ENCODE measurements at regions of chr5 and their contacts with region 1.

Region 1: DNA sequence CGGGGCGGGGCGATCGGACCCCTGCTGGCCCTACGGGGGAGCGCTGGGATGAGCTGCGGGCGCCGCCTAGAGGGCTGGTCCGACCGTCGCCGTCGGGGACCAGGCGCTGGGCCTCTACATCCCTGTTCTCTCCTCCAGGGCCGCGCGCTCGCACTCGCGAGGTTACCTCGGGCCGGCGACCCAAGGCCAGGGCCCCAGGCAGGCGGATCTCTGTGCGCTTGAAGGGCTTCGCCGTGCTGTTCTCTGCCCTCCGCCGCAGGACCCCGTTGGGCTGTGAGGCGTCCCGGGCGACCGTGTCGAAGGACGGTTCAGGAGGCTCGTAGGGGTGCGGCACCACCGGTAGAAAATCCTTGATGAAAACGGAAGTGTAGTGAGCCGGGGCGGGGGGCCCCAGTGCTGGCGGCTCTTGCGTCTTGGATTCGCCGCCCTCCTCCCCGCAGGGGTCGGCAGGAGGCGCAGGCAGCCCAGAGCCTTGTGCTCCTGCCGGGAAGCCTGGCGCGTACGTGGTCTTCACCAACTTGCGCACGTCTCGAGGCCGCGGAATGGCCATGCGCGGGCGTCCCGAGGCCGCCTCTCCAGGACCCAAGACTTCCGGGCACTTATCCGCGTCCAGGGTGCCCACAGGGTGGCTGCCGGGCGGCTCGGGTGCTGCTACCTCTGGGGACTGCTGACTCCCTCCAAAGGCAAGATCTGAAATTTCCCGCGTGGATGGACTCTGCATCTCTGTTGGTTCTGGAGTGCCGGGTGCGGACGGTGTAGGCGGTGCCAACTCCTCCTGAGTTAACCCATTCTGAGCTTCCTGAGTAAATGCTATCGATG is 2.0 kb downstream of the PROB1 start:
- DNase-seq: peak in 1 of 2 donors; percentile 61
- ATAC-seq: no peak
- H3K4me3 ChIP-seq: peak overlapping the region; percentile 67 to 84 (median 72)
- H3K27ac ChIP-seq: peak overlapping the region; percentile 99 to 100 (median 100)
- H3K4me1 ChIP-seq: peaks cover 35 to 63% of the 10 kb centered on the region in 2 donors
- H3K27me3 ChIP-seq: no peaks in the 10 kb centered on the region
- CTCF ChIP-seq: peak; percentile 36 to 60 (median 51)
- POLR2A ChIP-seq: no peak

Region 2: GRCh38 chr5:138752951-138753793 is 639.7 kb before region 1 on chr5 and contains the start of gene CTNNA1:
- in situ Hi-C with region 1: no loop called
- intact Hi-C with region 1: loop called (anchors 2 kb)
- DNase-seq: peak; percentile 66 to 80
- ATAC-seq: peak; percentile 85 to 87
- H3K4me3 ChIP-seq: peak within 1 kb of the TSS; percentile 75 to 94 (median 79)
- H3K27ac ChIP-seq: peak within 1 kb of the TSS; percentile 87 to 100 (median 96)
- H3K4me1 ChIP-seq: peaks cover 13 to 22% of the 10 kb centered on the region in 2 donors
- H3K27me3 ChIP-seq: no peaks in the 10 kb centered on the region
- CTCF ChIP-seq: peak in 1 of 5 experiments; percentile 11
- POLR2A ChIP-seq: peak; percentile 76 to 84
- total RNA-seq, gene CTNNA1: 92.6 to 164 (median 114) TPM

Region 3: DNA sequence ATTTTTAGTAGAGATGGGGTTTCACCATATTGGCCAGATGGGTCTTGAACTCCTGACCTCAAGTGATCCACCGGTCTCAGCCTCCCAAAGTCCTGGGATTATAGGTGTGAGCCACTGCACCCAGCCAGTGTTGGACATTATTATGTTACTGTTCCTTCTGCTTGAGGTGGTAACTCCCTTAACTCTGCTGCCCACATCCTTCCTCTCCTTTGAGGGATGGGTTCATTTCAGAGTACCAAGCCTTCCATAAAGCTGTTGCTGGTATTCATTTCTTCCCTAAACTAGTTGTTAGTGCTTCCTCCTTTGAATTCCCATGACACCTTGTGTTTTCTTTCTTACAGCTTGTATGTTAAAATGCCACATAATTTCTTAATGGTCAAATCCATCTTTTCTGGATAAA is 585.7 kb before region 1 on chr5:
- in situ Hi-C with region 1: no loop called
- intact Hi-C with region 1: no loop called
- DNase-seq: no peak
- ATAC-seq: no peak
- H3K4me3 ChIP-seq: no peak overlapping the region
- H3K27ac ChIP-seq: no peak overlapping the region
- H3K4me1 ChIP-seq: peaks cover 13 to 18% of the 10 kb centered on the region in 2 donors
- H3K27me3 ChIP-seq: no peaks in the 10 kb centered on the region
- CTCF ChIP-seq: no peak
- POLR2A ChIP-seq: no peak

Region 4: GRCh38 chr5:138849426-138849825 is 543.5 kb before region 1 on chr5:
- in situ Hi-C with region 1: no loop called
- intact Hi-C with region 1: no loop called
- DNase-seq: no peak
- ATAC-seq: no peak
- H3K4me3 ChIP-seq: no peak overlapping the region
- H3K27ac ChIP-seq: no peak overlapping the region
- H3K4me1 ChIP-seq: peaks cover 18 to 39% of the 10 kb centered on the region in 2 donors
- H3K27me3 ChIP-seq: no peaks in the 10 kb centered on the region
- CTCF ChIP-seq: no peak
- POLR2A ChIP-seq: no peak

Region 5: DNA sequence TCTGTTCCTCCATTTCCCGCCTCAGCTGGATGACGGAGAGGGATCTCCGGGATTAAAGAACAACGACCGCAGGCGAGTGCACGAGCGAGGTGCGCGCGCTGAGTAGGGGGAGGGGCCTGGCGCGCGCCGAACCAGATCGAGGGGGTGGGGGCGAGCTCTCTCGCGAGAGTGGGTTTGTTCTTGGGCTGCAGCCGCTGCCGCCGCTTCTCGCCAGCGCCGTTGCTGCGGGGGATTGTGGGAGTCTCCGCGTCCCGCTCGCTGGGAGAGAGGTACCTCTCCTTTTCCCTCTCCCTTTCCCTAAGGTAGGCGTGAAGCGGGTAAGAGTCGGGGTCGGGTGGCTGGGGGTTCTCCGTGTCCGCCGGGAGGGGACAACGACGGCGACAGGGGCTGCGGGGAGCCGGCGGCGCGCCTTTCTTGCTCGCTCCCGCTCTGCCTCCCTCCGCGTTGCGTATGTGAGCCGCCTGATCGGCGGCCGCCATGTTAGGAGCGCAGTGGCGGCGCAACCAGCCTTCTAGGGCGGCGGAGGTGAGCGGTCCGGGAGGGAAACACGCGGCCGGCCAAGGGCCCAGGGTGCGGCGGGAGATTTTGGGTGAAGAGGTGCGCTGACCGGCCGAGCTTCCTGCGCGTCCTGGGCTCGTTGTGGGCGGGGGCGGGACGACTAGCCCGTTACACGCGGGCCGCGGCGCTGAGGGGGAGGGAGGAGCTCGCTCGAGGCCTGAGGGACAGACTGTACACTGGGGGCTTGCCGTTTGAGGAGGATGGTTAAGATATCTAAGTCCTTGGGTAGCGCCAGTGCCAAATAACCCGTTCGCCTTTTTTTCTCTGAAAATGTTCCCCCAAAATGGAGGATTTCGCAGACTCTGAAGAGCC is 99.1 kb before region 1 on chr5 and contains the start of gene MATR3:
- in situ Hi-C with region 1: no loop called
- intact Hi-C with region 1: loop called (anchors 1 kb)
- DNase-seq: peak; percentile 92 to 96
- ATAC-seq: peak; percentile 86 to 90
- H3K4me3 ChIP-seq: peak within 1 kb of the TSS; percentile 82 to 97 (median 86)
- H3K27ac ChIP-seq: peak within 1 kb of the TSS; percentile 93 to 100 (median 99)
- H3K4me1 ChIP-seq: peaks cover 42 to 43% of the 10 kb centered on the region in 2 donors
- H3K27me3 ChIP-seq: no peaks in the 10 kb centered on the region
- CTCF ChIP-seq: no peak
- POLR2A ChIP-seq: peak; percentile 98 to 99
- total RNA-seq, gene MATR3: 115 to 188 (median 156) TPM

Region 6: DNA sequence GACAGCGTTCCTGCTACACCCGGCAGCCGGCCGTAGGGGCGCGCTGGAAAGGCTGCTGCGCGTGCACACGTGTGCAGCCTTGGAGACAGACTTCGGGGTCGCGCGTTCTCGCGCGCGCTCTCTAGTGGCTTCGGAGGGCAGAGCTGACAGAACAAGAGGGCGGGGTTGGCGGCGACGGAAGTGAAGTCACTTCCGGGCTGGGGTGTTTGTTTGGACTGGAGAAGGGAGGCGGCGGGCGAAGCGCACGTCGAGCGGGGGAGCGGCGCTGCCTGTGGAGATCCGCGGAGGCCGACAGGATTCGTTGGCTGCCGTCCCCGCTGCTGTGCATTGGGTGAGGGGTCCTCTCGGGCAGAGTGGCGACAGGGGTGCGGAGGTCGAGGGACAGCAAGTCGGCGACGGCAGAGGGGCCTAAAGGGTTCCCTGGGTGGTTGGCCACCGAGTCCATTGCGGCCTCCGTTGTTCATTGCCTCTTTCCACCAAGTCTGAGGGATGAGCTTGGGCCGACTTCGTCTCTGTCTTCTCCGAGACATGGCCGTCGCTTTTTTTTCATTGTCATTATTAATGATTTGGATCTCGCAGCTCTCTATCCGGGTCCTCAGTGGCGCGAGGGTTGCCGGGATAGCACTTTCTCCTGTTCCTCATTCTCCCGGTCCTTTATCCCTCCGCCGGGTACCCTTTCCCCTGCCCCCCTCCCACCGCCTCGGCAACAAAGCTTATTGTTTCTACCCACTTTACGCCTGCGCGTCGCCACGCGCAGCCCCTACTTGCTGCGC is 51.1 kb before region 1 on chr5 and contains the start of gene PAIP2:
- in situ Hi-C with region 1: no loop called
- intact Hi-C with region 1: loop called (anchors 2 kb)
- DNase-seq: peak; percentile 94 to 96
- ATAC-seq: peak; percentile 92 to 95
- H3K4me3 ChIP-seq: peak within 1 kb of the TSS; percentile 89 to 98 (median 92)
- H3K27ac ChIP-seq: peak within 1 kb of the TSS; percentile 96 to 100 (median 98)
- H3K4me1 ChIP-seq: peaks cover 21 to 36% of the 10 kb centered on the region in 2 donors
- H3K27me3 ChIP-seq: no peaks in the 10 kb centered on the region
- CTCF ChIP-seq: peak; percentile 57 to 86 (median 80)
- POLR2A ChIP-seq: peak; percentile 92 to 96
- total RNA-seq, gene PAIP2: 111 to 148 (median 126) TPM

Region 7: GRCh38 chr5:139371482-139372435 is 21.1 kb before region 1 on chr5:
- in situ Hi-C with region 1: no loop called
- intact Hi-C with region 1: loop called (anchors 1 kb)
- DNase-seq: no peak
- ATAC-seq: no peak
- H3K4me3 ChIP-seq: no peak overlapping the region
- H3K27ac ChIP-seq: peak overlapping the region; percentile 80 to 87 (median 86)
- H3K4me1 ChIP-seq: peaks cover 26 to 39% of the 10 kb centered on the region in 2 donors
- H3K27me3 ChIP-seq: no peaks in the 10 kb centered on the region
- CTCF ChIP-seq: no peak
- POLR2A ChIP-seq: no peak

Region 8: GRCh38 chr5:139903795-139904565 is 511.1 kb after region 1 on chr5:
- in situ Hi-C with region 1: no loop called
- intact Hi-C with region 1: no loop called
- DNase-seq: no peak
- ATAC-seq: peak; percentile 22 to 34
- H3K4me3 ChIP-seq: peak overlapping the region; percentile 53 to 76 (median 62)
- H3K27ac ChIP-seq: peak overlapping the region in 1 of 4 donors; percentile 1
- H3K4me1 ChIP-seq: peaks cover 12 to 26% of the 10 kb centered on the region in 2 donors
- H3K27me3 ChIP-seq: no peaks in the 10 kb centered on the region
- CTCF ChIP-seq: no peak
- POLR2A ChIP-seq: peak in 1 of 2 donors; percentile 12

Measured in gastrocnemius medialis (tissue), 4 donors.